OCI-LY7 (cell line): ENCODE measurements at regions of chr9 and their contacts with region 1.

Region 1: GRCh38 chr9:27033823-27034403 is 28.4 kb upstream of the LRRC19 start:
- DNase-seq: peak; percentile 48
- H3K4me3 ChIP-seq: no peak overlapping the region
- H3K27ac ChIP-seq: no peak overlapping the region
- H3K4me1 ChIP-seq: no peaks in the 10 kb centered on the region
- CTCF ChIP-seq: peak; percentile 94

Region 2: DNA sequence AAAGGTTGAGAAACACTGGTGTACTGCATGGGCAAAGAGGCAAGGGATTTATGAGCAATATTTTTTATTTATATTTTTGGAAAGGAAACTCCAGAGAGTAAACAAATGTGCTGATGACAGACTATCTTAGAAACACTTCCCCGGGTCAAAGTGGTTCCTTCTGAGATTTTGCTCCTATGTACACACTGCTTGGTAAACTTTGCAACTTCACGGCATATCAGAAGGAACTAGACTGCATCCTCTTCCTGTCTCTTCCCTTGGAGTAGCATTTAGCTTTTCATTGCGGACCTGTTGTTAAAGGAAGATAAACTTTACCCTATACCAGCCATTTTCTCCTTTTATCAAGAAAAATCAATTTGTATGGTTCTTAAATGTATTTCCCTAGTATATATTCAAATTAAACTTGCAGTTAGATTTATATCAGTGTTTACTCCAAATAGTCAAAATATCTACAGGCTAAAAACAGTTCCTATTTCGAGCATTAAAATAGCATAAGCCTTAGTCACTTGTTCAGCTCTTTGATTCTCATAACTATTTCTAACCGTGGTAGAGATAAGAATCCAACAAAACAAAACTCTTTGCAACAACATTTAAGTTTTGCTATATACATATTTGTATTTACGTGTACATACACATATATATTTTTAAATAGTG is 19.6 kb after region 1 on chr9:
- CTCF ChIA-PET with region 1: no interaction called
- POLR2A ChIA-PET with region 1: no interaction called
- intact Hi-C with region 1: loop called (anchors 2 kb)
- DNase-seq: no peak
- H3K4me3 ChIP-seq: no peak overlapping the region
- H3K27ac ChIP-seq: no peak overlapping the region
- H3K4me1 ChIP-seq: no peaks in the 10 kb centered on the region
- CTCF ChIP-seq: no peak

Region 3: DNA sequence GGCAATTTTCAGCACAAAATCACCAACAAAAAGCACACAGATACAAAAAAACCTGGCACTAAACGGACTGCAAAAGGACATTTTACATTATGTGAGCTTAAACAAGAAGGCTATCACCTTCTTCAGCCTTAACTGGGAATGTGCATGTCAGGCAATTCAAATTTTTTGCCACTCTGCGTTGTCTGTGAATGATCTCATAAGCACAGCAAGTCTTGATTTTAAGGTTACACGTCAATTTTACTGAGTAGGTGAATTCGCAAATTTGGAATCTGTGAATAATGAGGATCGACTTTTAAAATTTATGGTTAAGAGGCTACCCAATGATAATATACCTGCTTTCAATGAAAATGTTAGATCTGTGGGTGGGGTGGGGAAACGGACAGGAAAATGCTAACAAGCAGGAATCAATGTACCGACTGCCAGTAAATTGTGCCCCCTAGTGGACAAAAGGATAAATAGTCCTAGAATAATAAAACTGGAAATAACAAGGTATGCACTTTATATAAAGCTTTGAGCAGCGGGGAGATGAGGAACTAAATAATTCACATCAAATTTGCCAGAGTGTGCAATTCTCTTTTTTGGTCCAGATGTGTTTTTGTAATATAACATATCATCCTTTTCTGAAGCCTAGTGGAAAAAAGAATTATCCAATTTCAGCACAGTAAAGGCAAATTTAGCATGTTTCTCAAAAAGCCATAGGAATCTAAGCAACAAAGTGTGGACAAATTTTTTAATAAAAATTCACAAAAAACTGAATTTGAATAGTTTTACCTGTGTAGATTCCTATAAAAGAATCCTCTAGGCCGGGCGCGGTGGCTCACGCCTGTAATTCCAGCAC is 242.5 kb after region 1 on chr9:
- CTCF ChIA-PET with region 1: no interaction called
- POLR2A ChIA-PET with region 1: no interaction called
- intact Hi-C with region 1: loop called (anchors 2 kb)
- DNase-seq: peak; percentile 65
- H3K4me3 ChIP-seq: no peak overlapping the region
- H3K27ac ChIP-seq: no peak overlapping the region
- H3K4me1 ChIP-seq: no peaks in the 10 kb centered on the region
- CTCF ChIP-seq: peak; percentile 92